ENCODE measurements at regions of chr7 and their contacts with region 1.

Region 1: GRCh38 chr7:70230761-70231160 is 632.5 kb downstream of the AUTS2 start:
- DNase-seq: no peak
- H3K4me3 ChIP-seq: no peak overlapping the region
- H3K27ac ChIP-seq: no peak overlapping the region
- H3K4me1 ChIP-seq: no peaks in the 10 kb centered on the region
- CTCF ChIP-seq: no peak

Region 2: DNA sequence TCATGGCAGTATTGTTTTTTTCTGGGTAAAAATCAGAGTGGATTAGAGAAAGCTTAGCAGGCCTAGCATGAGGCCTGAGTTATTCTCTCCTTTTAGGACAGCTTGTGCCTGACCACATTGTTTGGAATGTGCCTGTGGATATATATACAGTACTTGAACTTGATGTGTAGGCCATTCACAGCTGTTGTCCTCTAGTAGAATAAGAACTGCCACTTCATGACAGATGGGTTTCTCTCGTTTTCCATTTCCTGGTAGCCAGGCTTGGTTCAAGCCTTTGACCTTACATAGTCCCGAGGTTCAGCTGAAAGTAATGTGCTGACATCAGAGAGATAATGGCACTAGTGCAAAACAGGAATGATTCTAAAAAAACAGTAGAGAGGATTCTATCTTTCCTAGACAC is 158.5 kb before region 1 on chr7:
- CTCF ChIA-PET with region 1: no interaction called
- POLR2A ChIA-PET with region 1: no interaction called
- intact Hi-C with region 1: no loop called
- DNase-seq: no peak
- H3K4me3 ChIP-seq: no peak overlapping the region
- H3K27ac ChIP-seq: no peak overlapping the region
- H3K4me1 ChIP-seq: no peaks in the 10 kb centered on the region
- CTCF ChIP-seq: no peak

Region 3: GRCh38 chr7:70569335-70569819 is 338.6 kb after region 1 on chr7:
- CTCF ChIA-PET with region 1: no interaction called
- POLR2A ChIA-PET with region 1: no interaction called
- intact Hi-C with region 1: loop called (anchors 5 kb)
- DNase-seq: no peak
- H3K4me3 ChIP-seq: no peak overlapping the region
- H3K27ac ChIP-seq: no peak overlapping the region
- H3K4me1 ChIP-seq: no peaks in the 10 kb centered on the region
- CTCF ChIP-seq: no peak